CD8-positive, alpha-beta T cell (primary cell): ENCODE measurements at regions of chr13 and their contacts with region 1.

Region 1: GRCh38 chr13:92640936-92641335 is 585.7 kb upstream of the GPC6 start:
- DNase-seq: no peak
- ATAC-seq: no peak
- H3K4me3 ChIP-seq: no peak overlapping the region
- H3K4me3 Mint-ChIP-seq: no peak overlapping the region
- H3K27ac ChIP-seq: no peak overlapping the region
- H3K27ac Mint-ChIP-seq: no peak overlapping the region
- H3K4me1 ChIP-seq: no peaks in the 10 kb centered on the region
- H3K4me1 Mint-ChIP-seq: no peaks in the 10 kb centered on the region
- H3K27me3 ChIP-seq: no peaks in the 10 kb centered on the region
- H3K27me3 Mint-ChIP-seq: no peaks in the 10 kb centered on the region
- CTCF ChIP-seq: no peak

Region 2: GRCh38 chr13:93775507-93776108 is 1134.7 kb after region 1 on chr13:
- CTCF ChIA-PET with region 1: no interaction called
- POLR2A ChIA-PET with region 1: no interaction called
- intact Hi-C with region 1: loop called in 1 of 2 experiments (anchors 10 kb)
- DNase-seq: no peak
- ATAC-seq: no peak
- H3K4me3 ChIP-seq: no peak overlapping the region
- H3K4me3 Mint-ChIP-seq: no peak overlapping the region
- H3K27ac ChIP-seq: no peak overlapping the region
- H3K27ac Mint-ChIP-seq: no peak overlapping the region
- H3K4me1 ChIP-seq: no peaks in the 10 kb centered on the region
- H3K4me1 Mint-ChIP-seq: no peaks in the 10 kb centered on the region
- H3K27me3 ChIP-seq: no peaks in the 10 kb centered on the region
- H3K27me3 Mint-ChIP-seq: peaks cover 4% of the 10 kb centered on the region
- CTCF ChIP-seq: no peak